ENCODE measurements at regions of chr3 and their contacts with region 1.

Region 1: DNA sequence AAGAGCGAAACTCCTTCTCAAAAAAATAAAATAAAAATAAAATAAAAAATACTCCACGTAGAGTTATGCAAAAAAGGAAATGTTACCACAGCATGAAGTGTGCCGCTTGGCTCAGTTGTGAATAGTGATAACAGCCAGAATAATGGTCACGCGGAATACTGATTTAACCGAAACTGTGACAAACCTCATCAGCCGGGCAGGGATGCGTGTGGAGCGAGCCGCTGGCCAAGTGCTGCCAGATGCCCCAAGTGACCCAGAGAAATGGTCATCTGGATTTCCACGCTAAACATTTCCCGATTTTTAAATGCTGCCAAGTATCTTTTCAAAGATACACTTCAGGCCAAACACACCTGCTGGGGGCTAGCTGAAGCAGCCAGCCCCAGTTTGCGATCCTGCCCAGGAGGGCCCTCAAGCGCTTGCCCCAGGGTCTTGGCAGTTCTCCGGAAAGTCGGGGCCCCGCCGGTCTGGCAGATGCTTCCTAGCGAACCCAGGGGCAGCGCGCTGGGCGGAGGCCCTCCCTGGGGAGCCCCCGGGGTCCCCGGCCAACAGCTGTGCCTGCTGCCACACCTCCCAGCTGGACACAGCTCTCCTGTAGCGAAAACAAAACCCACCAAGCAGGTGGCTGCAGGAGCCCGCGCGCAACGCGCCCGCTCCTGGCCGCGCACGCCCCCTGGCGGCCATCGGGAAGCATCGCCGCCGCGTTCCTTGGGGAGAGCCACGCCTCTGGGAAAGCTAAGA is 35.1 kb downstream of the CMTM6 start:
- DNase-seq: no peak
- H3K4me3 ChIP-seq: no peak overlapping the region
- CTCF ChIP-seq: peak; percentile 96

Region 2: DNA sequence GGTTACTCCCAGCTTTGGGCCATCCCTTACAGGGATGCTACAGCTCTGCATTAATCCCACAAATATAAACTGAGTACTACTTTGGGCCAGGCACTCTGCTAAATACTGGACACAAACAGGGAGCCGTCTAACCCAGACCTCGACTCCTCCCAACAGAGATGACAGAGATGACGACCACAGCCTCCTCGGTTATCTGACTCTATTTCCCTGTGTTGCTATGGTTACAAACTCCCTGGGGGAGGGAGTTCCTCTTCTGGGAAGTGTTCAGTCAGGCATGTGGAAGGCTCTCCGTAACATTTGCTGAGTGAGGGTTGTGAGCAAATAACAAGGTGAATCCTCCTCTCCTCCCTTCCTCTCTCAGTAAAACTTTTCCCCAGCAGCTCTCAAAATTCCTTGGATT is 82.6 kb before region 1 on chr3:
- CTCF ChIA-PET with region 1: interaction called, 19 read pairs
- POLR2A ChIA-PET with region 1: no interaction called
- DNase-seq: no peak
- H3K4me3 ChIP-seq: no peak overlapping the region
- CTCF ChIP-seq: no peak

Region 3: GRCh38 chr3:32401556-32402081 is 65.9 kb before region 1 on chr3:
- CTCF ChIA-PET with region 1: interaction called, 30 read pairs
- POLR2A ChIA-PET with region 1: no interaction called
- DNase-seq: no peak
- H3K4me3 ChIP-seq: peak overlapping the region; percentile 44
- CTCF ChIP-seq: no peak

Region 4: GRCh38 chr3:32421991-32422859 is 45.3 kb before region 1 on chr3:
- CTCF ChIA-PET with region 1: interaction called, 12 read pairs
- POLR2A ChIA-PET with region 1: no interaction called
- DNase-seq: peak; percentile 44
- H3K4me3 ChIP-seq: no peak overlapping the region
- CTCF ChIP-seq: no peak

Region 5: GRCh38 chr3:32493437-32494414 is 26.2 kb after region 1 on chr3:
- CTCF ChIA-PET with region 1: interaction called, 154 read pairs
- POLR2A ChIA-PET with region 1: no interaction called
- DNase-seq: no peak
- H3K4me3 ChIP-seq: no peak overlapping the region
- CTCF ChIP-seq: no peak

Region 6: GRCh38 chr3:32675164-32675563 is 207.7 kb after region 1 on chr3:
- CTCF ChIA-PET with region 1: no interaction called
- POLR2A ChIA-PET with region 1: no interaction called
- DNase-seq: no peak
- H3K4me3 ChIP-seq: no peak overlapping the region
- CTCF ChIP-seq: no peak

Measured in AG04449 (cell line).